A673 (cell line): ENCODE measurements at regions of chr13 and their contacts with region 1.

Region 1: GRCh38 chr13:50783717-50784290 is 59.7 kb downstream of the DLEU7 start:
- DNase-seq: no peak
- H3K4me3 ChIP-seq: no peak overlapping the region
- H3K27ac ChIP-seq: no peak overlapping the region
- H3K4me1 ChIP-seq: no peaks in the 10 kb centered on the region
- H3K27me3 ChIP-seq: no peaks in the 10 kb centered on the region
- CTCF ChIP-seq: no peak

Region 2: GRCh38 chr13:50387051-50387581 is 396.7 kb before region 1 on chr13:
- CTCF ChIA-PET with region 1: no interaction called
- POLR2A ChIA-PET with region 1: no interaction called
- intact Hi-C with region 1: no loop called
- DNase-seq: peak; percentile 38
- H3K4me3 ChIP-seq: no peak overlapping the region
- H3K27ac ChIP-seq: peak overlapping the region; percentile 53
- H3K4me1 ChIP-seq: peaks cover 43% of the 10 kb centered on the region
- H3K27me3 ChIP-seq: no peaks in the 10 kb centered on the region
- CTCF ChIP-seq: peak; percentile 43

Region 3: DNA sequence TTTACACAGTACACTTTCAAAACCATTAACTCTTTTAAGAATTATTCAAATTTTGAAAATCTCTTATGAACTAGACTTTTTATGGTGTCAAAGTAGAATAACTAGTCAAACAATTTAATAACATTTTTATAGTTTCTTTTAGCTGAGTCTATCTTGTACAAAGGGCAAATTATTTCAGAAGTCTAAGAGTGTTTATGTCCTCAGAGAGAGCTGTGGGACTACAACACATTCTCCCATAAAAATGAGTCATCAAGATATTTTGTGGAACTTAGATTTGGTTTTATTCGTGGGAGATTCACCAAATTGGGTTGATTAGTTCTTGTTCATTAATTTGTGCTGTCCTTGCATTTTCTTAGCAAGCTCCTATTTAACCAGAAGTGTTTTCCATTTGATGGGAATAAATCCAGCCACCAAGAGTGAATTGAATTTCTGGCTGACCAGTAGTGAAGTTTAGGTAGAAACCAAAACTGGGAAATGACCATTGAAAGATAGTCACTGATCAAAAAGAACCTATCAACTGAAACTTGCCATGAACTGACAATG is 231.3 kb before region 1 on chr13:
- CTCF ChIA-PET with region 1: no interaction called
- POLR2A ChIA-PET with region 1: interaction called, 11 read pairs
- intact Hi-C with region 1: no loop called
- DNase-seq: no peak
- H3K4me3 ChIP-seq: no peak overlapping the region
- H3K27ac ChIP-seq: no peak overlapping the region
- H3K4me1 ChIP-seq: no peaks in the 10 kb centered on the region
- H3K27me3 ChIP-seq: no peaks in the 10 kb centered on the region
- CTCF ChIP-seq: no peak

Region 4: GRCh38 chr13:50731400-50731799 is 52.4 kb before region 1 on chr13:
- CTCF ChIA-PET with region 1: no interaction called
- POLR2A ChIA-PET with region 1: no interaction called
- intact Hi-C with region 1: no loop called
- DNase-seq: no peak
- H3K4me3 ChIP-seq: no peak overlapping the region
- H3K27ac ChIP-seq: no peak overlapping the region
- H3K4me1 ChIP-seq: no peaks in the 10 kb centered on the region
- H3K27me3 ChIP-seq: no peaks in the 10 kb centered on the region
- CTCF ChIP-seq: no peak

Region 5: GRCh38 chr13:50760751-50761150 is 23.1 kb before region 1 on chr13:
- CTCF ChIA-PET with region 1: no interaction called
- POLR2A ChIA-PET with region 1: interaction called, 13 read pairs
- intact Hi-C with region 1: no loop called
- DNase-seq: no peak
- H3K4me3 ChIP-seq: no peak overlapping the region
- H3K27ac ChIP-seq: no peak overlapping the region
- H3K4me1 ChIP-seq: no peaks in the 10 kb centered on the region
- H3K27me3 ChIP-seq: no peaks in the 10 kb centered on the region
- CTCF ChIP-seq: no peak